Gastrocnemius medialis (tissue), 4 donors: ENCODE measurements at regions of chr1 and their contacts with region 1.

Region 1: DNA sequence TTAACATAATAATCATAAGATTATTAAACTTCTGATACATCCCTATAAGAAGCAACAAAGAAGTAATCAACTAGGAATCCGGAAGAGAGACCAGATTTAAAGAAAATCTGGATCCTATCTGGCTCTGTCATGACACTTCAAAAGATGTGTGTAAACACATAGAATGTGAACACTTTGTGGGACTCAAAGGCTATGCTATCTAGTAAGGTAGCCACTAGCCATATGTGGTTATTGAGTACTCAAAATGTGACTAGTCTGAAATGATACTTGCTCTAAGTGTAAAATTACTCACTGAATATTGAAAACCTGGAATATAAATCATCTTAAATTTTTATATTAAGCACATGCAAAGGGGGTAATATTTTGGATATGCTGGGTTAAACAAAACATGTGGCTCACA is 8.7 kb downstream of the FUBP1 start:
- DNase-seq: no peak
- ATAC-seq: no peak
- H3K4me3 ChIP-seq: no peak overlapping the region
- H3K27ac ChIP-seq: no peak overlapping the region
- H3K4me1 ChIP-seq: peaks cover 31 to 33% of the 10 kb centered on the region in 2 donors
- H3K27me3 ChIP-seq: no peaks in the 10 kb centered on the region
- CTCF ChIP-seq: no peak
- POLR2A ChIP-seq: no peak

Region 2: GRCh38 chr1:77847621-77848080 is 122.5 kb before region 1 on chr1:
- in situ Hi-C with region 1: no loop called
- intact Hi-C with region 1: no loop called
- DNase-seq: no peak
- ATAC-seq: no peak
- H3K4me3 ChIP-seq: no peak overlapping the region
- H3K27ac ChIP-seq: no peak overlapping the region
- H3K4me1 ChIP-seq: peaks cover 0 to 3% of the 10 kb centered on the region in 2 donors
- H3K27me3 ChIP-seq: no peaks in the 10 kb centered on the region
- CTCF ChIP-seq: no peak
- POLR2A ChIP-seq: no peak

Region 3: GRCh38 chr1:77938651-77939050 is 31.5 kb before region 1 on chr1:
- in situ Hi-C with region 1: no loop called
- intact Hi-C with region 1: loop called (anchors 5 kb)
- DNase-seq: no peak
- ATAC-seq: no peak
- H3K4me3 ChIP-seq: no peak overlapping the region
- H3K27ac ChIP-seq: peak overlapping the region in 2 of 4 donors; percentile 13 to 46
- H3K4me1 ChIP-seq: no peaks in the 10 kb centered on the region
- H3K27me3 ChIP-seq: no peaks in the 10 kb centered on the region
- CTCF ChIP-seq: no peak
- POLR2A ChIP-seq: no peak

Region 4: GRCh38 chr1:78092686-78093085 is 122.5 kb after region 1 on chr1:
- in situ Hi-C with region 1: no loop called
- intact Hi-C with region 1: no loop called
- DNase-seq: no peak
- ATAC-seq: peak; percentile 78 to 80
- H3K4me3 ChIP-seq: no peak overlapping the region
- H3K27ac ChIP-seq: peak overlapping the region in 1 of 4 donors; percentile 32
- H3K4me1 ChIP-seq: peaks cover 0 to 16% of the 10 kb centered on the region in 2 donors
- H3K27me3 ChIP-seq: no peaks in the 10 kb centered on the region
- CTCF ChIP-seq: no peak
- POLR2A ChIP-seq: no peak